ENCODE measurements at regions of chr1 and their contacts with region 1.

Region 1: DNA sequence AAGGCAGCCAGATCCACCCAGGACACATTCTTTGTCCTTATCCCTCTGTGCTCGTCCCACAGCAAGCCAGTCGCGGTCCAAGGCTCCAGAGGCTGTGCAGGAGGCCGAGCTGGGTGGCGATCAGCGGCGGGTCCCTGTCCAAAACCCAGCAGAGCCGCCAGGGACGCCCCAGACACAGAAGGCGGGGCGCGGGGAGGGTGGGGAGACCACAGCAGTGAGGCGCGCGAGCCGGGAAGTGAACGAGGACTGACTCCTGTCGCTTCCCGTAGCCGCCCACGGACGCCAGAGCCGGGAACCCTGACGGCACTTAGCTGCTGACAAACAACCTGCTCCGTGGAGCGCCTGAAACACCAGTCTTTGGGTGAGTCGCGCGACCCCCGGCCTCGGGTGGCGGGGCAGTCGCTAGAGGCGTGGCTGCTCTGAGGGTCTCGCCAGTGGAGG is at the start of gene LGALS8:
- DNase-seq: peak; percentile 63 to 73
- H3K4me3 ChIP-seq: peak within 1 kb of the TSS; percentile 77
- H3K27ac ChIP-seq: peak within 1 kb of the TSS; percentile 83
- H3K4me1 ChIP-seq: peaks cover 36% of the 10 kb centered on the region
- H3K27me3 ChIP-seq: no peaks in the 10 kb centered on the region
- CTCF ChIP-seq: no peak
- total RNA-seq, gene LGALS8: 36.4 and 59.2 TPM in 2 replicates

Region 2: GRCh38 chr1:235225299-235225698 is 1298.4 kb before region 1 on chr1:
- CTCF ChIA-PET with region 1: no interaction called
- POLR2A ChIA-PET with region 1: no interaction called
- intact Hi-C with region 1: no loop called
- DNase-seq: no peak
- H3K4me3 ChIP-seq: no peak overlapping the region
- H3K27ac ChIP-seq: peak overlapping the region; percentile 15
- H3K4me1 ChIP-seq: no peaks in the 10 kb centered on the region
- H3K27me3 ChIP-seq: no peaks in the 10 kb centered on the region
- CTCF ChIP-seq: no peak

Region 3: GRCh38 chr1:235809688-235810397 is 713.9 kb before region 1 on chr1:
- CTCF ChIA-PET with region 1: interaction called, 13 read pairs
- POLR2A ChIA-PET with region 1: no interaction called
- intact Hi-C with region 1: no loop called
- DNase-seq: no peak
- H3K4me3 ChIP-seq: no peak overlapping the region
- H3K27ac ChIP-seq: no peak overlapping the region
- H3K4me1 ChIP-seq: no peaks in the 10 kb centered on the region
- H3K27me3 ChIP-seq: no peaks in the 10 kb centered on the region
- CTCF ChIP-seq: no peak

Region 4: DNA sequence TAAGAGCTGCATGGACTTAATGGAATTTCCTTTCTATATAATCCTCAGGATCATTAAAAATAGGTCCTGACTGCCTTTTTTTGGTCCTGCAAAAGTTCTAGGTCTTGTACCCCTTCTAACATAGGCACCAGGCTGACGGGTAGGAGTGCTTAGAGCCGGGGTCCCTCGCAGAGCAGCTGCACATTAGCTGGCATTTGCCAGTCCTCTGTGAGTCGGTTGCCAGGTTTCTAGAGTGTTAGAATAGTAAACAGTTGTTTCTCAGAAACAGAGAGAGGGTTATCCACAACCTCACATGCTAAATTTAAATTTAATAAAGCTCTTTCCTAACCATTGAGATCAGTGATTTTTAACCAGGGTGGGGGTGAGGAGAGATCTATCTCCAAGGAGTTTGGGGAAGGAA is 116.0 kb after region 1 on chr1:
- CTCF ChIA-PET with region 1: no interaction called
- POLR2A ChIA-PET with region 1: no interaction called
- intact Hi-C with region 1: no loop called
- DNase-seq: no peak
- H3K4me3 ChIP-seq: no peak overlapping the region
- H3K27ac ChIP-seq: no peak overlapping the region
- H3K4me1 ChIP-seq: no peaks in the 10 kb centered on the region
- H3K27me3 ChIP-seq: peaks cover 78% of the 10 kb centered on the region
- CTCF ChIP-seq: no peak

Region 5: DNA sequence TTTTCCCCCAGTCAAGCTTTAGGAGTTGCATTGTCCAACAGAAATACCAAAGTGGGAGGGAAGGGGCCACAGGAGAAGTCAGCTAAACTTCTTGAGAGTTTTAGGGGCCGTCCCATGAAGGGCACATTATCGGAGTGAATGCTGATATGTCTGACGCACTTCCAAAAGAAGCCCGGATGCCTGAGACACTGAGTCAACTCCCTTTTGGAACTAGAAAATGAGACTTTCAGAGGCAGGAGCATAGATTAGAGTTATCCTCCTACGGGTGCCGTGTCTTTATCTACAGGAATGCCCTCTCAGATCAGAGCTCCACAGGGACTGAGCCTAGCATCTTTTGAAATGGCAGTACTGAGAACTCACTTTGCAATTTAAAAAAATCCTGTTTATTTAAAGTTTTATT is 175.6 kb after region 1 on chr1:
- CTCF ChIA-PET with region 1: no interaction called
- POLR2A ChIA-PET with region 1: no interaction called
- intact Hi-C with region 1: no loop called
- DNase-seq: no peak
- H3K4me3 ChIP-seq: no peak overlapping the region
- H3K27ac ChIP-seq: no peak overlapping the region
- H3K4me1 ChIP-seq: no peaks in the 10 kb centered on the region
- H3K27me3 ChIP-seq: peaks cover 83% of the 10 kb centered on the region
- CTCF ChIP-seq: no peak